Left cardiac atrium (tissue), 4 donors: ENCODE measurements at regions of chr1 and their contacts with region 1.

Region 1: GRCh38 chr1:227762233-227762911 is 27.1 kb downstream of the SNAP47 start:
- DNase-seq: peak; percentile 90
- ATAC-seq: peak; percentile 78 to 80

Region 2: DNA sequence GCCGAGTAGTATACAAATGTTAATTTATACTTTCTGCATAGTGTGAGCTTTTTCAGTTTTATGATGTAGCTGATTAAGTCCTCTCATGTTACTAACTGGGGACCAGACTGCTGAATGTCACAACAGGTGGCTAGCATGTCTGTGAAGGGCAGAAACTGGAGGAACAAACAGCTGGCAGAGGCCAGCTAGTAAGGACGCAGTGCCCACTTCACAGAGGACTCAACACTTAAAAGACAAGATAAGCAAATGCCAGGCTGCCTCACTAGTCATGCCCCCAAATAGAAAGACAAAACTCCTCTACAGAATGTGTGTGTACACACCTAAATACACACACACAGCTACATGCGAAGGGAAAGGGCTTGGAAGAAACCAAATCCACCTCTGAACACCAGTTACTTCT is 272.8 kb before region 1 on chr1:
- intact Hi-C with region 1: loop called in 1 of 2 experiments (anchors 10 kb)
- DNase-seq: no peak
- ATAC-seq: peak; percentile 90 to 92

Region 3: GRCh38 chr1:227946624-227947385 is 184.4 kb after region 1 on chr1:
- intact Hi-C with region 1: loop called (anchors 1 to 5 kb)
- DNase-seq: peak; percentile 78
- ATAC-seq: peak; percentile 80 to 86

Region 4: GRCh38 chr1:227961651-227962225 is 199.4 kb after region 1 on chr1:
- intact Hi-C with region 1: no loop called
- DNase-seq: no peak
- ATAC-seq: no peak

Region 5: GRCh38 chr1:228073857-228074545 is 311.6 kb after region 1 on chr1:
- intact Hi-C with region 1: loop called in 1 of 2 experiments (anchors 10 kb)
- DNase-seq: no peak
- ATAC-seq: peak in 1 of 2 donors; percentile 4